Activated T-helper 2 cell treated with anti-CD3 and anti-CD28 coated beads, Interferon-gamma antibody, Interleukin-2, Interleukin-4, amounts not matched to agents 10 μg/mL and 5 μg/mL and 100 μg/mL, durations not matched to agents 14 hours and 24 hours and 36 hours (primary cell): ENCODE measurements at regions of chr12 and their contacts with region 1.

Region 1: DNA sequence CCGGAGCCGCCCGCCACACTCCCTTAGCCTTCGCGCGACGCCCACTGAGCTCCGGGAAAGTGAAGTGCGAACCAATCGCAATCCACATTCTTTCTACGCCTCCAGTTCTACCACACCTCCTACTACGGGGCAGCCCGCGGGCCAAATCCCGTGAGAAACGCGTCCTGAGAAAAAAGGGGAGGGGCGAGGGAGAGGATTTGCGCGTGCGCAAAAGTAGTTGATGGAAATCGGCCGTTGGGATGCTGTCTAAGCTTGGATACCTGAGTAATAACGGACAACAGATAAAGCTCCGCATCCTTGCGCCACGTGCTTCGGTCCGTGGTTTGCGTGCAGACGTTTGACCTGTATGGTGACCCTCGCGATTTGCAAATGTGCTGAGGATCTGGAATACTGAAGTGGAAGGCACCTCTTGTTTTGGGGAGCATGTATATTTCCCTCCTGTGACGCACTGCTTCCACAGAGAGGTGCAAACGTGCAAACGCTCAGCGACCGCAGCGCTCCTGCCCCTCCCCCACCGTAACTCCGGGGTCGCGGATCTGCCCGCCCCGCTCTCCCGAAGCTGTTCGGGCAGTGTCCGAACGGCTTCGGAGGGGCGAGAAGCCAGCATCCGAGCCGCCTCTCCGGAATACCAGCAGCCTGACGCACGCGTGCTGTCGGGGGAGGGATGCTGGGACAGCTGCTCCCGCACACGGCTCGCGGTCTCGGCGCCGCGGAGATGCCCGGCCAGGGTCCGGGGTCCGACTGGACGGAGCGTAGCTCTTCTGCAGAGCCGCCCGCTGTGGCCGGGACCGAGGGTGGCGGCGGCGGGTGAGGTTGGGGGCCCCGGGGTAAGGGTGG is at the starts of genes FAM216A and GPN3:
- DNase-seq: peak; percentile 97
- H3K4me3 Mint-ChIP-seq: peak within 1 kb of the TSS; percentile 99
- H3K27ac Mint-ChIP-seq: peak within 1 kb of the TSS; percentile 96
- H3K4me1 Mint-ChIP-seq: peaks cover 25% of the 10 kb centered on the region
- H3K27me3 Mint-ChIP-seq: no peaks in the 10 kb centered on the region
- total RNA-seq, gene FAM216A: 44.7 and 48.8 TPM in 2 replicates
- total RNA-seq, gene GPN3: 43.9 and 47.5 TPM in 2 replicates

Region 2: DNA sequence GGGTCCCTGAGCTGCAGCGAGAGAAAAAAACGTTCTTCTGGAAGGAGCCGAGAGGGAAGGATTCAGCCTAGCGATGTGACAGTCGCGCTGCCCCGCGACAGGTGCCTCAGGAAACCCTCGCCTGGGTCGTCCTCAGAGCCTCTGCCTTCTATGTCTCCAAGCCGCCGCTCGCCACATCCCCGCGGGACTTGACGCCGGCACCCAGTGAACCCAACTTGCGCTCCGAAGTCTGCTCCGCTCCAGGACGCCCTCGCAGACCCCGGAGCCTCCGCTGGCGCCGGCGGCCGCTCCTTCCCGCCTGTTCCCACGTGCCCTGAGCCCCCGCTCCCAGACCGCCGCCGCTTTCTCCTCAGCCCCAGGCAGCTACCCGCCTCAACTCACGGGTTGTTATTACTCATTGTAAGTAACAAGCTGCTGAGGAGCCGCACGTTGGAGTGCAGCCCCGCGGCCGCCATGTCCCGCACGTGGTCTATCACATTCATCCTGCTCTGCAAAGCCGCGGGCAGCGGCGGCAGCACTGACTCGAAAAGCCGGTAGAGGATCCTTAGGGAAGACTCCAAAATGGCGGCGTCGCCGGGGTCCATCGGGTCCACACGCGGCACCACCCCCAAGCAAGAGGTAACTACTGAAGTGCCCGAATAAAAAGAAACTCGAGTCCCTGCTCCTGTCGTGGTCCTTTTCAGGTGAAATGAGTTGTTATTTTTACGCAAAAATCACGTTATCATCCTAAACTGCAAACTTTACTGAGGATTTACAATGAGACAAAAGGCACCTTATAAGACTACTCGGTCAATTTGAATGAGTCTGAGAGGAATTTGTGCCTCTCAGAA is 65.1 kb before region 1 on chr12 and contains the start of gene ANAPC7:
- intact Hi-C with region 1: loop called (anchors 1 kb)
- DNase-seq: peak; percentile 81
- H3K4me3 Mint-ChIP-seq: peak within 1 kb of the TSS; percentile 99
- H3K27ac Mint-ChIP-seq: peak within 1 kb of the TSS; percentile 98
- H3K4me1 Mint-ChIP-seq: peaks cover 16% of the 10 kb centered on the region
- H3K27me3 Mint-ChIP-seq: no peaks in the 10 kb centered on the region
- total RNA-seq, gene ANAPC7: 67.2 and 68.4 TPM in 2 replicates

Region 3: GRCh38 chr12:110449799-110450497 is 18.5 kb before region 1 on chr12 and contains the start of gene ARPC3:
- intact Hi-C with region 1: loop called (anchors 1 kb)
- DNase-seq: peak; percentile 95
- H3K4me3 Mint-ChIP-seq: peak within 1 kb of the TSS; percentile 100
- H3K27ac Mint-ChIP-seq: peak within 1 kb of the TSS; percentile 99
- H3K4me1 Mint-ChIP-seq: peaks cover 24% of the 10 kb centered on the region
- H3K27me3 Mint-ChIP-seq: no peaks in the 10 kb centered on the region
- total RNA-seq, gene ARPC3: 312 and 338 TPM in 2 replicates

Region 4: DNA sequence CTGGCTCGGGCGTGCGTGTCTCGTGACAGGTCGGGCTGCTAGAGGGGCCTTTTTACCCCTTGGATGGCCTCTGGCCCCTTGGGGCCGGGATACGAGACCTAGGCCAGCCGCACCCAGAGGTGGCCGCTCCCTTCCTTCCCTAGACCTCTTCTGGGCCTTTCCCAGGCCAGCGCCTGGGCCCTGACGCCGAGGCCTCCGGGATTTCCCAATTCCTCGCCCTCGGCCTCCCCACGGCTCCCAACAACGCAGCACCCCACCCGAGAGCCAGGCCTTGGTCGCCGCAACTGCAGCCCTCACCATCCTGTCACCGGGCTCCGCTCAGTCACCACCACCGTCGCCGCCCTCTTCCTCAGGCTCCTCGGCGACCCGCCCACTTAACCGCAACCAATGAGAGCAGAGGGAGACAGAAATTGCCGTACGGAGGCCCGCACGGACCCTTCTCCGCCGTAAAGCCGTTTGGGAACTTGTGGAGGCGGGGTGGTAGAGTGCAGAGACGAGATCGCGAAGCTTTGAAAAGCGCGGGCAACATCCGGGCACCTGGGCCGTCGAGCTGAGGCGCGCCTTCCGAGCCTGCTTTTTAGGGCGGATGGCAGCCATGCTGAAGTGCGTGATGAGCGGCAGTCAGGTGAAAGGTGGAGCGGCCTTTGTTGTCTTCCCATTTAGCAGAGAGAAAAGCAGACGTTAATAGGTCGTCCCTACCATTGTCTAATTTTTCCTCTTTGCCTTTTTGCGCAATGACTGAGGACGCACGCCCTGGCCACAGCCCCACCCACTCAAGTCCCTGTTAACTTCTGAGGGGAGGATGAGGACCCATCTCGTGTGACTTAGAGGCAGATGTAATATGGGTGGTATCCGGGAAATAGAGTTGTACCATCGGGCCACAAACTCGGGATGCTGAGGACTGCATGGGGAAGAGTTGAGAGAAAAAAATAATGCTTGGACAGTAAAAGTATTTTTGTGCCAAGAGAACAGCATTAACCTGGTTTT is 33.6 kb after region 1 on chr12 and contains the starts of genes RAD9B and VPS29:
- intact Hi-C with region 1: loop called (anchors 1 kb)
- DNase-seq: peak; percentile 99
- H3K4me3 Mint-ChIP-seq: peak within 1 kb of the TSS; percentile 88
- H3K27ac Mint-ChIP-seq: peak within 1 kb of the TSS; percentile 91
- H3K4me1 Mint-ChIP-seq: peaks cover 24% of the 10 kb centered on the region
- H3K27me3 Mint-ChIP-seq: no peaks in the 10 kb centered on the region
- total RNA-seq, gene RAD9B: 0.28 and 0.41 TPM in 2 replicates
- total RNA-seq, gene VPS29: 103 and 107 TPM in 2 replicates

Region 5: GRCh38 chr12:110583137-110584059 is 115.0 kb after region 1 on chr12 and contains the start of gene PPTC7:
- intact Hi-C with region 1: loop called (anchors 1 kb)
- DNase-seq: peak; percentile 91
- H3K4me3 Mint-ChIP-seq: peak within 1 kb of the TSS; percentile 98
- H3K27ac Mint-ChIP-seq: peak within 1 kb of the TSS; percentile 96
- H3K4me1 Mint-ChIP-seq: peaks cover 61% of the 10 kb centered on the region
- H3K27me3 Mint-ChIP-seq: no peaks in the 10 kb centered on the region
- total RNA-seq, gene PPTC7: 41.7 and 42.4 TPM in 2 replicates

Region 6: DNA sequence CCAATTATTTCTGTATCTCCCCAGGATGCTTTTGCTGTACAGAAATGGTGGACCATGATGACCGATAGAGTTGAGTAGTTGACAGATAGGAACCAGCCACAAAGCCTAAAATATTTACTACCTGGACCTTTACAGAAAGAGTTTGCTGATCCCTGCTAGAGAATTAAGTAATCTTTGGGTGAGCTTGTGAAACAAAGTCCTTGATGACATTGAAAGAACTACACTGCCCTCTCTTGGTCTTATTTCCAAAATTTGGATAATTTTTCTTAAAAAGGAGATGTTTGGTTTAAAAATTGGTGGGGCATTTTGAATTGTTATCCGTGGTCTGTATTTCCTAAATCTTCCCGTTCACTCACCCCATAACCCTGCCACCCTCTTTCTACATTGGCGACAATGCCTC is 131.8 kb after region 1 on chr12:
- intact Hi-C with region 1: loop called (anchors 2 kb)
- DNase-seq: no peak
- H3K4me3 Mint-ChIP-seq: no peak overlapping the region
- H3K27ac Mint-ChIP-seq: no peak overlapping the region
- H3K4me1 Mint-ChIP-seq: peaks cover 11% of the 10 kb centered on the region
- H3K27me3 Mint-ChIP-seq: no peaks in the 10 kb centered on the region

Region 7: DNA sequence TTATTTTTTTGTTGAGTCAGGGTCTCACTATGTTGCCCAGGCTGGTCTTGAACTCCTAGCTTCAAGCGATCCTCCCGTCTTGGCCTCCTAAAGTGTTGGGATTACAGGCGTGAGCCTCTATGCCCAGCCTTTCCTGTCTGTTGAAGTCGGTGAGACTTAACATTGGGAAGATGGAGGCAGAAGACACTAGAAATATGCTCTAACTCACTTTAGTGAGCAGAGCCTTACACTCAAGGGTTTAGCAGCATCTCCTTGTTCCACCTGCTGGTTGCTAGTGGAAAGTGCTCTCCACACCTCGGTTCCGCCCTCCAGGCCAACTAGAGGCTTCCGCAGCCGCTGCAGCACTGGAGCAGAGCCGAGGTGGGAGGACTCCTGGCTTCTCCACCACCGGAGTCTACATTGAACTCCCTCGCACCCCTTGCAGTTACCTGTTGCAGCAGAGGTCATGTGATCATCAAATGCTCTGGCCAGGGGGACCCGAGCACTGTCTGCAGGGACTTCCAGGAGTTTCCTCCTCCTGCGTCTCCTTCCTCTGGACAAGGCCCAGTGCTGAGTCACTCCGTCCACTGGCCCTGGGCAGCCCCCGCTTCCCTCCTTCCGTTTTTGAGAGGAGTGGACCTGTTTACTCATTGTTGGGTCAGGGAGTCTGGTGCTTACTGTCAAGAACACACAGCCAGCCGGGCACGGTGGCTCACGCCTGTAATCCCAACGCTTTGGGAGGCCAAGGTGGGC is 229.9 kb after region 1 on chr12:
- intact Hi-C with region 1: loop called (anchors 5 kb)
- DNase-seq: peak; percentile 77
- H3K4me3 Mint-ChIP-seq: no peak overlapping the region
- H3K27ac Mint-ChIP-seq: peak overlapping the region; percentile 72
- H3K4me1 Mint-ChIP-seq: peaks cover 15% of the 10 kb centered on the region
- H3K27me3 Mint-ChIP-seq: no peaks in the 10 kb centered on the region